Activated CD8-positive, alpha-beta T cell treated with anti-CD3 and anti-CD28 coated beads, Interleukin-2, amount 10 ng/mL, durations not matched to agents 7 days and 5 days (primary cell): ENCODE measurements at regions of chr20 and their contacts with region 1.

Region 1: GRCh38 chr20:53869466-53870258 is 200.7 kb downstream of the BCAS1 start:
- DNase-seq: peak; percentile 87
- ATAC-seq: peak; percentile 76
- H3K4me3 Mint-ChIP-seq: peak overlapping the region; percentile 34
- H3K27ac Mint-ChIP-seq: peak overlapping the region; percentile 76
- H3K4me1 Mint-ChIP-seq: peaks cover 86% of the 10 kb centered on the region
- H3K27me3 Mint-ChIP-seq: no peaks in the 10 kb centered on the region

Region 2: DNA sequence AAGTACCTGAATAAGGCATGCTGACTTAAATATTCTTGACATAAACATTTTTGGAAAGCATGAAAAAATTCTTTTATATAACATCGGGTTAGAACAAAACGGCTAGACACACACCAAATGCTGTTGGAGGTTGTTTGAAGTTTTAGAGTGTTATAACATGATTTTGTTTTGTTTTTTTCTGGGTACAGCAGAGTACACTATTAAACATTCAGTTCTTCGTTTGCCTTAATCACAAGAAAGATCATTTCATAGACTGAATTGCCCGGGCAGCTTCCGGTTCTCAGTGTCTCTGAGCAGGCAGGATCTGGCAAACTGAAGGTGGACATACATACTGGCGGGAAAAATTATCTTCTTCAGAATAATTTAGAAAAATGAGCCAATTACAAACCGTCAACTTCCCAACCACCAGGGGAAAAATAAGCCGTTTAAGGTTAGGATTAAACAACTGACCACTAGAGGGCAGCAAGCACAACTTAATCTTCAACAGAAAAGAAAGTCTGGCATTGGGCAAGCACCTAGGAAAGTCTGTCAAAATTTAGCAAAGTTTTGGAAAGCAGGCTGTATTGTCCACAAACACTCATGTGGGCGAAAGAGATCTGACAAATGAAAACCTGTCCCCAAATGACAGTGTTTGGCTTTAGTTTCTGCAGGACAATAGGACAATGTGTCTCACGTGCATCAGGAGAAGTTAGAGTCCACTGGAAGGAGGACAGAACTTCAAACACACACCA is 291.0 kb before region 1 on chr20:
- CTCF ChIA-PET with region 1: interaction called, 13 read pairs
- POLR2A ChIA-PET with region 1: interaction called, 3 read pairs
- DNase-seq: peak; percentile 84
- ATAC-seq: peak; percentile 35
- H3K4me3 Mint-ChIP-seq: peak overlapping the region; percentile 80
- H3K27ac Mint-ChIP-seq: peak overlapping the region; percentile 81
- H3K4me1 Mint-ChIP-seq: peaks cover 87% of the 10 kb centered on the region
- H3K27me3 Mint-ChIP-seq: no peaks in the 10 kb centered on the region

Region 3: DNA sequence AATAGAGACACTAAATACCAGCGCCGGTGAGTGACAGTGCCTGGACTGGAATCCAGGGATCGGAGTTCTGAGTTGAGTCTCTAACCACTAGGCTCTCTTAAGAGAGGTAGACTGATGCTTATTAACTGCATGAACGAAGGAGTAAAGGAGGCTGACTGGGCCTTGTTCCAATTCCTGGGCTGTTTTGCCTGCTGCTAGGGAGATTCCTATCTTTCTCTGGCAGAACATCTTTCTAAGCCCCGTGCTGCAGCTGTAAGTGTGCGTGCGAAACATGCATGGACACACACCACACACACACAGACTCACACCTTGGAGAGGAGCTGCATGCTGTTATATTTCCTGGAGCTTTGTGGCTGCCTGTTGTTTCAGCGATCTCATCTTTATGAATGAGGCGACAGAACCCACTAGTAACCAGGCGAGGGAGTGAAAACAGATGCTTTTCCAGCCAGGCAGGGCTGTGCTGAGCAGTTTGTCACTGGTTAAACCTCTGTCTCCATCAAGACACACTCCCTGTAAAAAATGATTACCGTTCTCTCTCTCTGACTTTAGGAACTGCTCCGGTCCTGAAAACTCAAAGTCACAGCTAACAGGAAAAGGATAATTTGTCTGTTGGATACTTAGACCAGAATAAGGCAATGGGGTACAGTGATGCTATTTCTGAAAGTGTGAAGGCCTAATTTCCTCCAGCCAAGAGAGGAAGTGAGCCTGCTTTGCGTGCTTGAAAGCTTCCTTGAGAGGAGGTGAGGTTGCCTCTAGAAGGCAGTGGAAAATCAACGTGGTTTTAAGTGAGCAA is 118.6 kb before region 1 on chr20:
- CTCF ChIA-PET with region 1: interaction called, 60 read pairs
- POLR2A ChIA-PET with region 1: interaction called, 12 read pairs
- DNase-seq: peak; percentile 77
- ATAC-seq: peak; percentile 76
- H3K4me3 Mint-ChIP-seq: peak overlapping the region; percentile 56
- H3K27ac Mint-ChIP-seq: peak overlapping the region; percentile 94
- H3K4me1 Mint-ChIP-seq: peaks cover 76% of the 10 kb centered on the region
- H3K27me3 Mint-ChIP-seq: no peaks in the 10 kb centered on the region

Region 4: GRCh38 chr20:53839423-53840176 is 30.1 kb before region 1 on chr20:
- CTCF ChIA-PET with region 1: interaction called, 27 read pairs
- POLR2A ChIA-PET with region 1: interaction called, 7 read pairs
- DNase-seq: peak; percentile 88
- ATAC-seq: peak; percentile 59
- H3K4me3 Mint-ChIP-seq: peak overlapping the region; percentile 71
- H3K27ac Mint-ChIP-seq: peak overlapping the region; percentile 92
- H3K4me1 Mint-ChIP-seq: peaks cover 76% of the 10 kb centered on the region
- H3K27me3 Mint-ChIP-seq: no peaks in the 10 kb centered on the region

Region 5: DNA sequence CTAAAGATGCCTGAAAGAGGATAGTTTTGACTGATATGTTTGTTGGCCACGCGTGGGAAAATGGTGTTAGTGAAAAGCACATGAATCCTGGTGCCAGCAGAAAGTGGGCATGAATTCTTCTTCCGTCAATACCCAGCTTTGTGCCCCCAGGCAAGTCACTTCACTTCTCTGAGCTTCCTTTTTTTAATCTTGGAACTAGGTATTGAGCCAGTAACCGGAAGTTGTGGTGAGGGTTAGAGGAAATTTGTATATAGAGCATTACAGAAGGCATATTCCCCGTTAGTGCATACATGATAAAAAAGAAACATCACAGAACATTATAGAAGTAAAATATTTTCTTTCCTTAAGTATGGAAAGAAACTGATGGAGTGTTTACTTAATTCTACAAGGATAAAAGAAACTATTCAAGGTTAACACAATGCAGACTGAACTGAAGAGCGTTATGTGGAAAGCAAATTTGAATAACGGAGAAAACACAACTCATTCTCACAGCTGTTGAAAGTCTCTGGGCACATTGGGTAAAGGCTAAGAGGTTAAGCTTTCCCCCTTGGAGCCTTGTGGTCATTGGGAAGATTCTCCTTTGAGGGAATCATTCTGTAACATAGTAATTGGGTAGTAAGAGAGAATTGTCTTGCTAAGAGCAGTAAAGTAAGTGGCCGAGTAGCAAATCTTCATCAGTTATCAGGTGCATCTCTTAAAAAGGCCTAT is 22.4 kb before region 1 on chr20:
- CTCF ChIA-PET with region 1: interaction called, 32 read pairs
- POLR2A ChIA-PET with region 1: interaction called, 9 read pairs
- DNase-seq: no peak
- ATAC-seq: peak; percentile 10
- H3K4me3 Mint-ChIP-seq: peak overlapping the region; percentile 60
- H3K27ac Mint-ChIP-seq: peak overlapping the region; percentile 73
- H3K4me1 Mint-ChIP-seq: peaks cover 68% of the 10 kb centered on the region
- H3K27me3 Mint-ChIP-seq: no peaks in the 10 kb centered on the region

Region 6: GRCh38 chr20:53883098-53883811 is 13.6 kb after region 1 on chr20:
- CTCF ChIA-PET with region 1: interaction called, 23 read pairs
- POLR2A ChIA-PET with region 1: interaction called, 39 read pairs
- DNase-seq: no peak
- ATAC-seq: no peak
- H3K4me3 Mint-ChIP-seq: peak overlapping the region; percentile 83
- H3K27ac Mint-ChIP-seq: peak overlapping the region; percentile 62
- H3K4me1 Mint-ChIP-seq: peaks cover 80% of the 10 kb centered on the region
- H3K27me3 Mint-ChIP-seq: no peaks in the 10 kb centered on the region

Region 7: GRCh38 chr20:53899351-53900167 is 29.9 kb after region 1 on chr20:
- CTCF ChIA-PET with region 1: interaction called, 19 read pairs
- POLR2A ChIA-PET with region 1: interaction called, 10 read pairs
- DNase-seq: peak; percentile 89
- ATAC-seq: peak; percentile 95
- H3K4me3 Mint-ChIP-seq: peak overlapping the region; percentile 35
- H3K27ac Mint-ChIP-seq: peak overlapping the region; percentile 92
- H3K4me1 Mint-ChIP-seq: peaks cover 79% of the 10 kb centered on the region
- H3K27me3 Mint-ChIP-seq: no peaks in the 10 kb centered on the region